ENCODE measurements at regions of chr2 and their contacts with region 1.

Region 1: GRCh38 chr2:68832233-68832869 is 38.8 kb downstream of the BMP10 start:
- DNase-seq: peak; percentile 73
- ATAC-seq: peak; percentile 43

Region 2: GRCh38 chr2:68687018-68687417 is 145.3 kb before region 1 on chr2:
- intact Hi-C with region 1: no loop called
- DNase-seq: no peak
- ATAC-seq: no peak

Region 3: GRCh38 chr2:68774569-68775271 is 57.6 kb before region 1 on chr2:
- intact Hi-C with region 1: loop called (anchors 5 kb)
- DNase-seq: peak; percentile 93
- ATAC-seq: peak; percentile 78